Activated CD4-positive, alpha-beta memory T cell treated with anti-CD3 and anti-CD28 coated beads for 36 hours (primary cell): ENCODE measurements at regions of chr7 and their contacts with region 1.

Region 1: GRCh38 chr7:74254129-74254857 is at the start of gene RFC2:
- DNase-seq: peak; percentile 98
- H3K4me3 Mint-ChIP-seq: peak within 1 kb of the TSS; percentile 98
- H3K27ac Mint-ChIP-seq: peak within 1 kb of the TSS; percentile 94
- H3K4me1 Mint-ChIP-seq: peaks cover 18% of the 10 kb centered on the region
- H3K27me3 Mint-ChIP-seq: no peaks in the 10 kb centered on the region
- total RNA-seq, gene RFC2: 80.8 to 81.1 TPM

Region 2: GRCh38 chr7:73828107-73828803 is 426.0 kb before region 1 on chr7:
- CTCF ChIA-PET with region 1: no interaction called
- POLR2A ChIA-PET with region 1: no interaction called
- intact Hi-C with region 1: no loop called
- DNase-seq: peak; percentile 47
- H3K4me3 Mint-ChIP-seq: no peak overlapping the region
- H3K27ac Mint-ChIP-seq: no peak overlapping the region
- H3K4me1 Mint-ChIP-seq: peaks cover 25% of the 10 kb centered on the region
- H3K27me3 Mint-ChIP-seq: peaks cover 1% of the 10 kb centered on the region

Region 3: GRCh38 chr7:74083117-74083876 is 171.0 kb before region 1 on chr7 and contains the start of gene LIMK1:
- CTCF ChIA-PET with region 1: no interaction called
- POLR2A ChIA-PET with region 1: no interaction called
- intact Hi-C with region 1: loop called (anchors 2 kb)
- DNase-seq: peak; percentile 89
- H3K4me3 Mint-ChIP-seq: peak within 1 kb of the TSS; percentile 83
- H3K27ac Mint-ChIP-seq: peak within 1 kb of the TSS; percentile 65
- H3K4me1 Mint-ChIP-seq: peaks cover 7% of the 10 kb centered on the region
- H3K27me3 Mint-ChIP-seq: no peaks in the 10 kb centered on the region
- total RNA-seq, gene LIMK1: 16.4 to 16.9 TPM

Region 4: DNA sequence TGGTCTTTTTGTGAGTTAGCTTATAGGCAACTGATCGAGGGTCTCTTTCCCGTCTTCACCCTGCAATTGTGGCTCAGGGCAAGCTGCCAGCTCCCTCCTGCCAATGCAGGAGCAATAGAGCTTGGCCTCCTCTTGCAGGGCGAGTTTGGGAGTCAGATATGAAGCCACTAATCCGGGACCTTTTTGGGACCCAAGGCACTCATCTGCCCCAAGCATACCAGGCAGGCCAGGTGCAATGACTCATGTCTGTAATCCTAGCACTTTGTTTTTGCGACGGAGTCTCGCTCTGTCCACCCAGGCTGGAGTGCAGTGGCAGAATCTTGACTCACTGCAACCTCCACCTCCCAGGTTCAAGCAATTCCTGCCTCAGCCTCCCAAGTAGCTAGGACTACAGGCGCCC is 149.6 kb before region 1 on chr7:
- CTCF ChIA-PET with region 1: no interaction called
- POLR2A ChIA-PET with region 1: no interaction called
- intact Hi-C with region 1: no loop called
- DNase-seq: no peak
- H3K4me3 Mint-ChIP-seq: no peak overlapping the region
- H3K27ac Mint-ChIP-seq: no peak overlapping the region
- H3K4me1 Mint-ChIP-seq: no peaks in the 10 kb centered on the region
- H3K27me3 Mint-ChIP-seq: no peaks in the 10 kb centered on the region

Region 5: GRCh38 chr7:74115326-74115725 is 139.0 kb before region 1 on chr7:
- CTCF ChIA-PET with region 1: no interaction called
- POLR2A ChIA-PET with region 1: no interaction called
- intact Hi-C with region 1: no loop called
- DNase-seq: no peak
- H3K4me3 Mint-ChIP-seq: no peak overlapping the region
- H3K27ac Mint-ChIP-seq: no peak overlapping the region
- H3K4me1 Mint-ChIP-seq: no peaks in the 10 kb centered on the region
- H3K27me3 Mint-ChIP-seq: no peaks in the 10 kb centered on the region

Region 6: DNA sequence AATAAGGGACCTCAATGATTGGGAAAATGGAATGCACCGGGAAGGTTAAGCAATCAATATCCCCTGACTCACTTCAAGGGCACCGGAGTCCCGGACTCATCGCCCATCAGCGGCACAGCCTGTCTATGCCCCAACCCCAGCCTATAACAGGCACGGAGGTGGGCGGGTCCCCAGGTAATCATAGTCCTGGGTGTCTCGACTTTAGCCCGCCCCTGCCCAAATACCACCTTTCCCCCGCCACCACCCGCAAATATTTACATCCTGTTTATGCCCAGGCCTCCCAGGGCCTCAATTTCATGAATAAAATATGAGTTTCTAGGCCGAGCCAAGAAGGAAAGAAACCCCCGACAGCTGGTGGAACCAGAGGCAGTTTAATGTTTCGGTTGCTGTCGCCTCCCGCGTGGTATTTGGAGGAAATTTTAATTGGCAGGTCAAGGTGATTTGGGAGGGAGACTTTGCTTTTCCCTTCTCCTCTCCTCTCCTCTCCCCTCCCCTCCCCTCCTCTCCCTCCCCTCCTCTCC is 15.5 kb after region 1 on chr7:
- CTCF ChIA-PET with region 1: interaction called, 4 read pairs
- POLR2A ChIA-PET with region 1: no interaction called
- intact Hi-C with region 1: loop called (anchors 2 kb)
- DNase-seq: peak; percentile 71
- H3K4me3 Mint-ChIP-seq: peak overlapping the region; percentile 74
- H3K27ac Mint-ChIP-seq: no peak overlapping the region
- H3K4me1 Mint-ChIP-seq: peaks cover 10% of the 10 kb centered on the region
- H3K27me3 Mint-ChIP-seq: peaks cover 7% of the 10 kb centered on the region

Region 7: GRCh38 chr7:74306730-74307469 is 52.6 kb after region 1 on chr7:
- CTCF ChIA-PET with region 1: no interaction called
- POLR2A ChIA-PET with region 1: no interaction called
- intact Hi-C with region 1: no loop called
- DNase-seq: peak; percentile 37
- H3K4me3 Mint-ChIP-seq: no peak overlapping the region
- H3K27ac Mint-ChIP-seq: no peak overlapping the region
- H3K4me1 Mint-ChIP-seq: peaks cover 16% of the 10 kb centered on the region
- H3K27me3 Mint-ChIP-seq: peaks cover 15% of the 10 kb centered on the region

Region 8: DNA sequence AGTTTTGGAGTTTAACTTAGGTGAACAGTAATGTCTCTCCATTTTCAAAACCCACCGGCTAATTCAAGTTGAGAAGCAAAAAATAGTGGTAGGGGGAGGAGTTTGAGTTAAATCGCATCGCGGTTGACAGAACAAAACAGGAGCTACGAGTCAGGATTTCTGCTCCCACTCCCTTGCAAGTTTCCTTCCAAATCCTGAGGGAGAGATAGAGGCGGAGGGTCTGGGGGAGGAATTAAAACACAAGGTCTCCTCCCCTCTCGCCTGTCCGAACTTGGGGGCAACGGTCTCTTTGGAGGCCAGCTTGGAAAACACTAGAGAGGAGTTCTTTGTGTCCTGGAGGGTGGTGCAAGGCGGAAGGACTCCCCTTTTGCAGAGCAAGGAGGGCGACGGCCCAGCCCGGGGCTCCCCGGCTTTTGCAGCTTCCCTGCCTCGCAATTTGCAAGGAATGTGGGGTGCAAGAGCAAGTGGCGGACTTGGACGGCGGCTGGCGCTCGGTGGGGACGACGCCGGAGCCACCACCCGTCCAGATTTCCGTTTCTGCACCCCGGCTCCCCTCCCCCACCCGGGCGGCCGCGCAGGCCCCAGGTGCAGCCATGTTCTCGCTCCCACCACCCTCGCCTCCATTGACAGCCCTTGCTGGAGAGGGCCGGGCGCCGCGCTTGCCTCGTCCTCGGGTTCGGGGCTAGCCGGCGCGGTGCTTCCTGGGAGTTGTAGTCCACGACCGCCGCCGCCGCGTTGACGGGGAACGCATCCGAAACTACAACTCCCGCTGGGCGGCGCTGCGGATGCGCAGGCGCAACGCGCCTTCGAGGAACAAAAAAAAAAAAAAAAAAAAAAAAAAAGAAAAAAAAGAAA is 402.8 kb after region 1 on chr7:
- CTCF ChIA-PET with region 1: no interaction called
- POLR2A ChIA-PET with region 1: no interaction called
- intact Hi-C with region 1: loop called (anchors 5 kb)
- DNase-seq: peak; percentile 98
- H3K4me3 Mint-ChIP-seq: peak overlapping the region; percentile 79
- H3K27ac Mint-ChIP-seq: peak overlapping the region; percentile 74
- H3K4me1 Mint-ChIP-seq: peaks cover 45% of the 10 kb centered on the region
- H3K27me3 Mint-ChIP-seq: no peaks in the 10 kb centered on the region